ENCODE measurements at regions of chr15 and their contacts with region 1.

Region 1: DNA sequence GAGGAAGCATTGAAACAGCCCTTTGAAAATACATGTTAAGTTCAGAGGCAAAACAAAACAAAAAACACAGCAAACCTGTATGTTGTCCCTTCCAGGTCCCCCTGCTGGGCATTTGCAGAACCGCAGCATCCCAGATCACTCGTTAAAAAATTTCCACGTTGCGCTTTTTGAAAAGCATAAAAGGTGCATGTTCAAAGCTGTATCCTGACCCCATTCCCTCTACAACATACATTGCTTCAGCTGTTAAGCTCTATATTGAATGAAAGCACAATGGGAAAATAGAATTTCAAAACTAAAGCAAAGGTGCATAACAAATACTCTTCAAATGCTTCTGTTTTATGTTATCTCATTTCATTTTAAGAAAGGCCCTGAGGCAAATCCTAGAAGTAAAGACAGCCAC is 328.3 kb downstream of the THSD4 start:
- H3K4me3 Mint-ChIP-seq: no peak overlapping the region
- H3K27ac Mint-ChIP-seq: no peak overlapping the region
- H3K4me1 Mint-ChIP-seq: peaks cover 13% of the 10 kb centered on the region
- H3K27me3 Mint-ChIP-seq: peaks cover 4% of the 10 kb centered on the region

Region 2: GRCh38 chr15:70826634-70827033 is 616.9 kb before region 1 on chr15:
- intact Hi-C with region 1: loop called (anchors 5 kb)
- H3K4me3 Mint-ChIP-seq: no peak overlapping the region
- H3K27ac Mint-ChIP-seq: peak overlapping the region; percentile 21
- H3K4me1 Mint-ChIP-seq: peaks cover 12% of the 10 kb centered on the region
- H3K27me3 Mint-ChIP-seq: peaks cover 3% of the 10 kb centered on the region

Region 3: GRCh38 chr15:71114896-71115554 is 328.5 kb before region 1 on chr15 and contains the start of gene THSD4:
- intact Hi-C with region 1: loop called (anchors 1 kb)
- H3K4me3 Mint-ChIP-seq: peak within 1 kb of the TSS; percentile 79
- H3K27ac Mint-ChIP-seq: no peak within 1 kb of the TSS
- H3K4me1 Mint-ChIP-seq: peaks cover 9% of the 10 kb centered on the region
- H3K27me3 Mint-ChIP-seq: peaks cover 50% of the 10 kb centered on the region

Region 4: GRCh38 chr15:71411538-71412482 is 31.7 kb before region 1 on chr15:
- intact Hi-C with region 1: no loop called
- H3K4me3 Mint-ChIP-seq: no peak overlapping the region
- H3K27ac Mint-ChIP-seq: no peak overlapping the region
- H3K4me1 Mint-ChIP-seq: no peaks in the 10 kb centered on the region
- H3K27me3 Mint-ChIP-seq: peaks cover 6% of the 10 kb centered on the region

Region 5: GRCh38 chr15:71471347-71471746 is 27.8 kb after region 1 on chr15:
- intact Hi-C with region 1: no loop called
- H3K4me3 Mint-ChIP-seq: no peak overlapping the region
- H3K27ac Mint-ChIP-seq: no peak overlapping the region
- H3K4me1 Mint-ChIP-seq: no peaks in the 10 kb centered on the region
- H3K27me3 Mint-ChIP-seq: peaks cover 2% of the 10 kb centered on the region

Measured in dendritic cell treated with granulocyte-macrophage colony-stimulating factor and Interleukin-4, amounts not matched to agents 40 ng/mL and 50 ng/mL, for 4 days (primary cell).